ENCODE measurements at regions of chr4 and their contacts with region 1.

Region 1: GRCh38 chr4:186037692-186038658 is 31.0 kb upstream of the TLR3 start:
- DNase-seq: peak; percentile 48
- H3K4me3 ChIP-seq: no peak overlapping the region
- H3K27ac ChIP-seq: no peak overlapping the region
- H3K4me1 ChIP-seq: no peaks in the 10 kb centered on the region
- H3K27me3 ChIP-seq: no peaks in the 10 kb centered on the region
- CTCF ChIP-seq: peak; percentile 63 to 70

Region 2: DNA sequence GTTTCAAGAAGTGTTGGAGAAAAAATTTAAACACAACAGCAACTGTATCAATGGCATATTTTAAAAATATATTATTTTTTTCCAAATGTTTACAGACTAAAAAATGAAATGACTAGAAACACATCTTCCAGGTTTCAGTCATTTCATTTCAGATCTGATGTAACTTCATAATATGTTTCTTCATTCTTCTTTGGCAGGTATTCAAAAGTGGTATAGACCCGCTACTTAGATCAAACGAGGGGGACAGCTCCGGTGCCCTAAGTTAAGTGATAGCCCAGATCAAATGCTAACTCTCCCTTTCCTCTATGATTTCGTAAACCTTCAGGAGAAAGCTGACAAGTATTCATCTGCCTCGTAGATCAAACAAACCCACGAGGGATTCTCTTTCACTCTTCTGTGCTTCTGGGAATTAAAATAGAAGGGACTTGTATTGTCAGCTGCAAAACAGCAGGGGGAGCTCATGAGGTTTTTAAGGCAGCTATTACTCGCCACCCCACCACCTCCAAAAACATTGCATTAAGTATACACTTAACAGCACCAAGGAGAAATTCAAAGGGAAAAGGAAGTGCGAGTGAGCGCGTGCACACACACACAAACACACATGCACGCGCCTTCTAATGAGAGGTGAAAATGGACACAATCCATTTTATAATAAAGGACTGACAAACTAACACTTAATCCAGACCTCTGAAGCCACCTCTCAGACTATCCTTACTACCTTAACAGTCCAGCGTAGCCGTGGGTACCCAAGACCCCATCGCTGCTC is 998.3 kb before region 1 on chr4:
- CTCF ChIA-PET with region 1: no interaction called
- dilution Hi-C with region 1: no loop called
- in situ Hi-C with region 1: loop called in 1 of 2 experiments (anchors 25 kb)
- intact Hi-C with region 1: no loop called
- DNase-seq: peak; percentile 35
- H3K4me3 ChIP-seq: peak overlapping the region; percentile 31 to 42 (median 32)
- H3K27ac ChIP-seq: no peak overlapping the region
- H3K4me1 ChIP-seq: no peaks in the 10 kb centered on the region
- H3K27me3 ChIP-seq: no peaks in the 10 kb centered on the region
- CTCF ChIP-seq: peak; percentile 71 to 78

Region 3: DNA sequence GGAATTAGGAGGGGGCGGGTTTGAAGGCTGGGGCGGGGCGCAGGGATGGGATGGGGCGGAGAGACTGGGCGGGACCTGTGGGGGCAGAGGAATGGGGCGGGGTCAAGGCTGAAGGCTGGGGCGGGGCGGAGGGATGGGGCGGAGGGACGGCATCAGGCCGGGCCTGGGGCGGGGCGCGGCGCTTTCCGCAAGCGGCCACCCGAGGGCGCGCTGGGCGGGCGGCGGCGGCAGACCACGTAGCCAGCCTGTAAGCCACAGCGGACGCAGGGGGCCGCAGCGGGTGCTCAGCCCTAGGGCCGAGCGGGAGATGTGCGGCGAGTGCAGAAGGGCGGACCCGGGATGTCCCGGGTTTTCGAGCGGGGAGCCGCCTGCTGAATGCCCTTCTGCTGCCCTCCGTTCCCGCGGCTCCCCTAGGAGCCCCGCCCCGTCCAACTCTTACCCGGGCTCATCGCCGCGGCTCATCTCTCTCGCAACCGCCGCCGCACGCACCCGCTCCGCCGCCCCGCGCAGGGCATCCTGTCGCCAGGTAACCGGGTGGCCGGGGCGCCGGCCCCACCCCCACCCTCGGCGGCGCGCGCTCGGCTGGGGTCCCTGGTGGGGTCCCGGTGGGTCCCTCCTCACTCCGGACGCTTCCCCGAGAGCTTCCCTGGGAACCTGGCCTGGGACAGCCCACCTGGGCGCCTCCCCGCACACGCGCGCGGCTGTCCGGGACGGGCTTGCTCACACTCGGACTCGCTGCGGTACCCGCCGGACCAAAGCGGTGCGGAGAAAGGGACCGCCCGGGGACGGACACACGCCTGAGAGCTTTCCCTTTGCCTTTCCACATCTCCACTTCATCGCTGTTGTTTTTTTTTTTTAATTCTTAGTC is 566.5 kb before region 1 on chr4 and contains the start of gene CCDC110:
- CTCF ChIA-PET with region 1: no interaction called
- dilution Hi-C with region 1: loop called (anchors 25 kb)
- in situ Hi-C with region 1: loop called in 1 of 2 experiments (anchors 25 kb)
- intact Hi-C with region 1: loop called (anchors 10 kb)
- DNase-seq: peak; percentile 81
- H3K4me3 ChIP-seq: peak within 1 kb of the TSS; percentile 71 to 86 (median 82)
- H3K27ac ChIP-seq: no peak within 1 kb of the TSS
- H3K4me1 ChIP-seq: peaks cover 10% of the 10 kb centered on the region
- H3K27me3 ChIP-seq: peaks cover 5% of the 10 kb centered on the region
- CTCF ChIP-seq: peak in 1 of 2 donors; percentile 46
- total RNA-seq, gene CCDC110: 0.17 to 0.59 TPM

Region 4: GRCh38 chr4:185479507-185479971 is 558.4 kb before region 1 on chr4:
- CTCF ChIA-PET with region 1: no interaction called
- dilution Hi-C with region 1: loop called (anchors 25 kb)
- in situ Hi-C with region 1: loop called in 1 of 2 experiments (anchors 25 kb)
- intact Hi-C with region 1: loop called (anchors 10 kb)
- DNase-seq: no peak
- H3K4me3 ChIP-seq: no peak overlapping the region
- H3K27ac ChIP-seq: no peak overlapping the region
- H3K4me1 ChIP-seq: no peaks in the 10 kb centered on the region
- H3K27me3 ChIP-seq: peaks cover 3% of the 10 kb centered on the region
- CTCF ChIP-seq: no peak

Region 5: DNA sequence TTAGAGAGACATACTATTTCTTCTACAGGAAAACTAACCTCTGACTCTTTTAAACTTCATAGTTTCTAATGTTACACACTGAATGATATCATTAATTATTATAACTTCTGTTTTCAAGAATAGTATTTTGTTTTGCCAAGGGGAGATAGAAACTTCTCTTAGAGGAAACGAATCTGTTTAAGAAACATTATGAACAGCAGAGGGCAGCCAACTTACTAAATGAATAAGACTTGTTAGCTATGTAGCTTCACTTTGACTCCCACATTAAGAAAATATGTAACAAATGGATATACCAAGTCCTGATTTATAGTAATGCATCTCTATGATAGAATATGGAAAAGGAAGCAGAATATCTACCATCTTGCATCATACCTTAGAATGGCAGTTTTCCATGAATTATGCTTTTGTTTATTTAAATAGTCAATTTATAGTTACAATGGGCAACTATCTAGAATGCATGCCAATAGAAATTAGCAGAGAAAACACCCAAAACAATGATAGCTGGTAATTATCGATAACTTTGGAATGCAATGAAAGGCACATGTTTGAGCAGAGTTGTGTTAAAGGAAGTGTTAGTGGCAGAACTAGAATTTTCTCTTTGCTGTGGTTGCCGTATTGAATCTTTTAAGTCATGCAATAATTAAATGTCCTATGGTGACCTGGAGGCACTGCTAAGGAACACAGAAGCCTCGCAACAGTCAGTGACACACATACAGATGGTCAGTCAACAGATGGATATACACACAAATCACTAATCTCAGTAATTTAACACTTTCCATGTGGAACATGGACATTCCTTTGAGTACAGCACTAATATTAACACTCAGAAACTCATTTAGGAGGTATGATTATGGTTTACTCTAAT is 396.9 kb before region 1 on chr4:
- CTCF ChIA-PET with region 1: interaction called, 13 read pairs
- dilution Hi-C with region 1: no loop called
- in situ Hi-C with region 1: no loop called
- intact Hi-C with region 1: loop called (anchors 1 kb)
- DNase-seq: peak; percentile 50
- H3K4me3 ChIP-seq: no peak overlapping the region
- H3K27ac ChIP-seq: no peak overlapping the region
- H3K4me1 ChIP-seq: no peaks in the 10 kb centered on the region
- H3K27me3 ChIP-seq: no peaks in the 10 kb centered on the region
- CTCF ChIP-seq: peak; percentile 18 to 51

Region 6: DNA sequence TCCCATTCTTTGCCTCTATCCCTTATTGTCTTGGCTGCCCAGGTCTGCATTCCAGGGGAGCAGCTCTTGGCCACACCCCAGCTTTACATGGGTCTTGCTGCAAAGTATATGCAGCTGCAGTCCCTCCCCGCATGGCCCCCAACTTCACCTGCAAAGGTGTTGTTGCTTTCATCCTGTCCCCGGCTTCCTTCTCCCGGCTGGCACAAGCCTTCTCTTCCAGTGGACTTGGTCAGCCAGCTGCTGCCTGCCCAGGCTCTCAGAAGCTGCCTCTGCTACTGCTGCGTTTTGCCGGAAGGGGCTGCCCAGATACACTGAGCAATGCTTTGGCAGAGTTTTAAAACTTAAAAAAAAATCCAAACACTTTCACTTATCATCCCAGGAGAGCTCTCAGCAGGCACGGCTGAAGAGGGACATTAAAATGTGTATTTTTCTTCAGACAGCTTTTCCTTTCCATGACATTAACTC is 381.5 kb before region 1 on chr4:
- CTCF ChIA-PET with region 1: interaction called, 4 read pairs
- dilution Hi-C with region 1: no loop called
- in situ Hi-C with region 1: no loop called
- intact Hi-C with region 1: loop called (anchors 1 kb)
- DNase-seq: peak; percentile 46
- H3K4me3 ChIP-seq: peak overlapping the region in 2 of 3 experiments; percentile 13 to 14
- H3K27ac ChIP-seq: no peak overlapping the region
- H3K4me1 ChIP-seq: no peaks in the 10 kb centered on the region
- H3K27me3 ChIP-seq: no peaks in the 10 kb centered on the region
- CTCF ChIP-seq: peak; percentile 30 to 61

Region 7: DNA sequence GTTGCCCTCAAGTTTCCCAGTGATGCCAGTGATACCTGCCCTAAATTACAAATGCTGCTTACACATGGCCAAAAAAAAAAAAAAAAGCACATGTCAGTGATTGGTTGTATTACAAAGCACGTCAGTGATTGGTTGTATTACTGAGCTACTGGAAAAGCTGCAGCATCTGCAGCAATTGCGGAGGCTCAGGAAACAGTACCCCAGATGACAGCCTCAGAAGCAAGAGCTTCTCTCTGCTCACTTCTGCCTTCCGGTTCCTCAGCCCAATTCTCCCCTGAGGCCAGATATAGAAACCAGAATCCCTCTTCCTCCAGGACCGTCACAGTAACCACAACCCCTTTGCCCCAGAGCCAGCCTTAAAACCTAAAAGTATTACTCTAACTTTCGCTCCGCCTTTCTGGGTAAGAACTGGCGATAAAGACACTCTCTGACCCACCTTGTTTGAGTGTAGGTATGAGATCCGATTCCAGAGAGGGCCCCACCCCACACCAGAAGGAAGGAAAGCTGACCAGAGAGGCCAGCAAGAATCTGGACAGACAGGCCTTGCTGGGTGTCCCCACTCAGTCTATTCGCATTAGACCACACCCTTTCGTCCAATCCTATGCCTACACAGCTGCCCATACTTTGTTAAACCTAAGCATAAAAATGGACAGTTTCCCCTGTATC is 141.0 kb before region 1 on chr4:
- CTCF ChIA-PET with region 1: no interaction called
- dilution Hi-C with region 1: no loop called
- in situ Hi-C with region 1: no loop called
- intact Hi-C with region 1: loop called (anchors 10 kb)
- DNase-seq: no peak
- H3K4me3 ChIP-seq: no peak overlapping the region
- H3K27ac ChIP-seq: no peak overlapping the region
- H3K4me1 ChIP-seq: no peaks in the 10 kb centered on the region
- H3K27me3 ChIP-seq: no peaks in the 10 kb centered on the region
- CTCF ChIP-seq: no peak

Region 8: GRCh38 chr4:186144142-186144955 is 106.4 kb after region 1 on chr4:
- CTCF ChIA-PET with region 1: no interaction called
- dilution Hi-C with region 1: no loop called
- in situ Hi-C with region 1: no loop called
- intact Hi-C with region 1: no loop called
- DNase-seq: peak; percentile 29
- H3K4me3 ChIP-seq: peak overlapping the region; percentile 12 to 52 (median 49)
- H3K27ac ChIP-seq: no peak overlapping the region
- H3K4me1 ChIP-seq: peaks cover 4% of the 10 kb centered on the region
- H3K27me3 ChIP-seq: no peaks in the 10 kb centered on the region
- CTCF ChIP-seq: peak in 1 of 2 donors; percentile 4

Measured in mammary epithelial cell (primary cell).